Panc1 (cell line): ENCODE measurements at regions of chr10 and their contacts with region 1.

Region 1: GRCh38 chr10:101042667-101043355 is 11.8 kb downstream of the SFXN3 start:
- DNase-seq: peak; percentile 97
- ATAC-seq: peak; percentile 97
- H3K4me3 ChIP-seq: peak overlapping the region; percentile 64 to 69
- H3K27ac ChIP-seq: peak overlapping the region; percentile 99
- H3K4me1 ChIP-seq: peaks cover 25% of the 10 kb centered on the region
- H3K27me3 ChIP-seq: no peaks in the 10 kb centered on the region
- CTCF ChIP-seq: no peak

Region 2: DNA sequence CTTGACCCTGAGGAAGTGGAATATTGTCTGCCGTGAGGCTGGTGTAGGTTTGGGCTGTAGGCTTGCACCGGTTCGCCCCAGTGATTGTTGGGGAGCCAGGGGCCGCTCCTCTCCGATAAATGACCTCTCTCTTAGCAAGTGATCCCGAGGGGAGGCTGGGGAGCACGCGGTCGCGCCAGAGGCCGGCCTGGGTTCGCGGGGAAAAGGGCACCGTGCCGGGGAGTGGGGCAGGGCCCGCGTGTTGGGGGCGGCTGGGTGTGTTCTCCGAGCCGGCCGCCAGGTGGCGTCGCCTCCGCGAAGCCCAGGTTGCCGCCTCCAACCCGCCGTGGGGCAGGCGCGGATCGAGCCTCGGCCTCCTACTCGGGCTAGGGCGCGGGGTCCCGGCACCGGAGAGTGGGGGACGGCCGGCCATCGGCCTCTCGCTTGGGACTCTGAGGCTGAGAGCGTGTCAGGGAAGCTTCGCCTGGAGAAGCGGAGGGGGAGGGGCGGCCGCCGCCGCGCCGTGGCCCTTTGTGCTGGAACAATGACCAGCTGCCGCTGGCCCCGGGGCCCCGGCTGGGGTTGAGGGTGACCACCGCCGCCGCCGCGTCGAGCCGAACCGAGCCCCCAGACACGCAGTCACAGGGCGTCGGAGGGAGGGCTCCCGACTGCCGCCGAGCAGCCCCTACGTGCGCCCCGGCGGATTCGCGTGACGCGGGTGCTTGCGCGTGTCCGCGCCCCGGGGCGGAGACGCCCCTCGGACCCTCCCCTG is 43.6 kb before region 1 on chr10:
- CTCF ChIA-PET with region 1: interaction called, 14 read pairs
- POLR2A ChIA-PET with region 1: no interaction called
- in situ Hi-C with region 1: no loop called
- intact Hi-C with region 1: no loop called
- DNase-seq: no peak
- ATAC-seq: peak; percentile 54
- H3K4me3 ChIP-seq: peak overlapping the region; percentile 74 to 87
- H3K27ac ChIP-seq: peak overlapping the region; percentile 96
- H3K4me1 ChIP-seq: peaks cover 37% of the 10 kb centered on the region
- H3K27me3 ChIP-seq: no peaks in the 10 kb centered on the region
- CTCF ChIP-seq: peak; percentile 99

Region 3: DNA sequence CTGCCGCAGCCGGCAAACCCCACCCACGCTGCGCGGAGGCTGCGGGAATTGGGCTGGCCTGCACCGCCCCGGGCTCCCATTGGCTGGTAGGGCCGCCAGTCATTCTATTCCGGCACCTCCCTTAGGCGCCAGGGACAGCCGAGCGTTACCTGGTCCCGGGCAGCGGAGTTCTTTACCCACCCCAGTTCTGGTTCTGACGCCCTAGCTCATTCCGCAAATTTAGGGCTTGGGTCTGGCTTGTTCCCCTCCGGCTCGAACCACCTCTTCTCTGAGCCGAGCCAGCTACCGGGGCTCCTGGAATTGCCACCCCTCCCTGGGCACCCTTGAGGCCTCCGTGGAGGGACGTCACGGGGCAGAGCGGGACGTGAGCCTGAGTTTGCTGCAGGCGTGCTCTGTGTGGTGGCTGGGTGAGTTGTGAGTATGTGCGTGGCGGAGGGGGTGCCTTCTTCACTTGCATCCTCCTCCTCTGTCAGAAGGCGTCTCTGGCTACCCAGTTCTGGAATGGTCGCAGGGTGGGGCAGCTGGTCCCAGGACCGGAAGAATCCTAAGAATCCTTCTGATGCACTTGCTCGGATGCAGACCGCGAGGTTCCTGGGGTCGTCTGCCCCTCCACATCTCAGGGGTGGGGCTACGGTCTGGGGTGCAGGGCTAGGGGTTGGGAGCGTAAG is 11.5 kb before region 1 on chr10 and contains the starts of genes PDZD7 and SFXN3:
- CTCF ChIA-PET with region 1: interaction called, 11 read pairs
- POLR2A ChIA-PET with region 1: interaction called, 3 read pairs
- in situ Hi-C with region 1: no loop called
- intact Hi-C with region 1: no loop called
- DNase-seq: no peak
- ATAC-seq: peak; percentile 93
- H3K4me3 ChIP-seq: peak within 1 kb of the TSS; percentile 69 to 94
- H3K27ac ChIP-seq: no peak within 1 kb of the TSS; the same call in 1 of the 2 replicates
- H3K4me1 ChIP-seq: peaks cover 20% of the 10 kb centered on the region
- H3K27me3 ChIP-seq: no peaks in the 10 kb centered on the region
- CTCF ChIP-seq: no peak
- total RNA-seq, gene PDZD7: 1.8 TPM
- total RNA-seq, gene SFXN3: 15.3 TPM

Region 4: DNA sequence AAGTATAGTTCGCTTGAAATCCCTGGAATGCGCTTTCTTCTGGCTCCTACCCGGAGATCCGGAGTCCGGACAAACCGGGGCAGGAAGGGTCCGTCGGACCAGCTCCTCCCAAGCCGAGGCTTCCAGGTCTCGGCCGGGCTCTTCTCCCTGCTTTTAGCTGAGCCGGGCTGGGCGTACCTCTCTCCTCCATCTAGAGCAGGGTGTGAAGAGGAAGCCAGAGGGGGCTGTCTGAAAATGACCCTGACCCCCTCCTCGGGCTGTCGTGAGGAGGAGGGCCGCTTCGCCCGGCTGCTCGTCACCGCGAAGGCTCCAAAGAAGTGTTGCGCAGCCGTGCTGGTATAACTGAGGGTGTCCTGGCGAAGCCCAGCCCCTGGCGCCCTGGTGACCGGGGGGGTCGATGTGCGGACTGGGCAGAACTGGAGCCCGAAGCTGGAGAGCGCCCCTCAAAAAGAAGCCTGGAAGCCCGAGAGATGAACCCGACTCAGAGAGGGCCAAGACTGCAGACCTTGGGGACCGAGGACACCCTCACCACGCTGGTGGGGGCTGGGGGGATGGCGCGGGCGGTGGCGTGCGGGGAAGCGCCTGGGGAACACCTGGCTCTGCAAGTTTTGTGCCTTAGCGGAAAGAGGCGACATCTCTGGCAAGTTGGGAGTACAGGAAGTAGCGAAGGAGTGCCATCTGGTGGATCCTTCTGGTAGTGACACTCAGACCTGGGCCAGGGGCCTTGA is 24.7 kb after region 1 on chr10:
- CTCF ChIA-PET with region 1: interaction called, 19 read pairs
- POLR2A ChIA-PET with region 1: interaction called, 7 read pairs
- in situ Hi-C with region 1: no loop called
- intact Hi-C with region 1: no loop called
- DNase-seq: no peak
- ATAC-seq: peak; percentile 64
- H3K4me3 ChIP-seq: peak overlapping the region; percentile 64 to 94
- H3K27ac ChIP-seq: peak overlapping the region; percentile 91
- H3K4me1 ChIP-seq: peaks cover 34% of the 10 kb centered on the region
- H3K27me3 ChIP-seq: no peaks in the 10 kb centered on the region
- CTCF ChIP-seq: peak; percentile 95

Region 5: DNA sequence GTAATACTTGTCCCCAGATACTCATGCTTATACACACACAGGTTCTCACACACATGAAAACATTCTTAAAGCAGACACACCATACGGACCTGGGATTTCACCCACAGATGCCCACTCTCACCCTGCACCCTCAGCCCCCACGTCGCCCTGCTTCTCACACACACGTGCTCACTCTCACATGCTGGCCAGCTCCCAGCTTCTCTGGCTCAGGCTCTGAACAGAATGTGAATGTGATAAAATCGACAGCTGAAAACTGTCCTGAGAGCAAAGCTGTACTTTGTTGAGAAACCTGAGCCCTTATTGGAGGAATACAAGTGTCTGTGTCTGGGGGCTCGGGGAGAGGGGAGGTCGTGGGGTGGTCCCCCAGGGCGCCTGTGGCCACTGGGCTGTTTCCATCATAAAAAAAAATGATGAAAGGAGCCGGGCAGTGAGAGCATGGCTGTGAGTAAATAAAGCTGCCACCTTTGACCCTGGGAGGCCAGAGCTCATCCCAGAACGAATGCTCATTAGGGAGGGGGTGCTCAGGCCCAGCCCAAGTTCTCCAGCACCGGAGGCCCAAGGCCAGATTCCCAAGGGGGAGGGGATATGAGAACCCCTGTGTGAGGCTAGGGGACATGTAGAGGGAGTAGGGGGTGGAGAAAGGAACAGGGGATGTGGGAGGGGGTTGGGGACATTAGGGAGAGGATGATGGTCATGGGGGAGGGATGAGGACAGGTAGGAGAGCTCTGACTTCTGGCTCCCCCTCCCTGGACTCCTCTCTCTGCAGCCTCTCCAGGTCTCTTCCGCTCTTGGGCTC is 70.2 kb after region 1 on chr10:
- CTCF ChIA-PET with region 1: interaction called, 13 read pairs
- POLR2A ChIA-PET with region 1: no interaction called
- in situ Hi-C with region 1: no loop called
- intact Hi-C with region 1: no loop called
- DNase-seq: no peak
- ATAC-seq: 0 out of 2 replicates have a peak, but pooled peaks have one; percentile 9
- H3K4me3 ChIP-seq: no peak overlapping the region
- H3K27ac ChIP-seq: no peak overlapping the region
- H3K4me1 ChIP-seq: peaks cover 5% of the 10 kb centered on the region; the same call in 1 of the 2 replicates
- H3K27me3 ChIP-seq: no peaks in the 10 kb centered on the region
- CTCF ChIP-seq: no peak

Region 6: GRCh38 chr10:101141616-101142532 is 99.1 kb after region 1 on chr10:
- CTCF ChIA-PET with region 1: interaction called, 37 read pairs
- POLR2A ChIA-PET with region 1: no interaction called
- in situ Hi-C with region 1: no loop called
- intact Hi-C with region 1: loop called (anchors 10 kb)
- DNase-seq: peak; percentile 48
- ATAC-seq: peak; percentile 94
- H3K4me3 ChIP-seq: peak overlapping the region in 1 of 2 experiments; percentile 4; a peak in 1 of 4 replicates
- H3K27ac ChIP-seq: 0 out of 2 replicates have a peak overlapping the region, but pooled peaks have one; percentile 13
- H3K4me1 ChIP-seq: peaks cover 6% of the 10 kb centered on the region
- H3K27me3 ChIP-seq: no peaks in the 10 kb centered on the region
- CTCF ChIP-seq: peak; percentile 100

Region 7: DNA sequence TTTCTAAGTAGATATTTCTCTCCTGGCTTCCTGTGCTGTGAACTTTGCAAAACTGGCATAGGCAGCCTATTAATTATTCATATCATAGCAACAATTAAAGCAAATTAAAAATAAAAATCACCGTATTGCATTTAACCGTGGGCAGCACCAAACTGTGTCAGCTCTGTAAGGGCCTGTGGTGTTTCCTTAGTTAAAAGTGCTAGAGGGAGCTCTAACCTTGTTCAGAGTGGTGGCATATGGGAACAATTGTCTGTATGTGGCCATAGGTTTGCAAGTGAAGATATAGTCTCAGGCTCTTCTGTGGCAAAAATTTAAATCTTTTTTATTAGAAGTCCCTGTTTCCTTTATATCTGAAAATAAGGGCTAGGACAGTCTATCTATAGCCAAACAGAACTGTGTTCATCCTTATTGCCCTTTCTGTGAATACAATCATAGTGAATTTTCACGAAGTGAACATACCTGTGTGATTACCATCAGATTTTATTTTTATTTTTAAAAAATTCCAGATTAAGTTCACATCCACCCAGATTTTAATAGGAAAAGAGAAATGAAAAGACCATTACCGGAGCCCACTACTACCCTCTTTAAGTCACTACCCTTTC is 452.6 kb after region 1 on chr10:
- CTCF ChIA-PET with region 1: no interaction called
- POLR2A ChIA-PET with region 1: interaction called, 17 read pairs
- in situ Hi-C with region 1: no loop called
- intact Hi-C with region 1: no loop called
- DNase-seq: peak; percentile 12
- ATAC-seq: peak; percentile 99
- H3K4me3 ChIP-seq: no peak overlapping the region
- H3K27ac ChIP-seq: no peak overlapping the region
- H3K4me1 ChIP-seq: no peaks in the 10 kb centered on the region
- H3K27me3 ChIP-seq: no peaks in the 10 kb centered on the region
- CTCF ChIP-seq: peak; percentile 81